Activated T-helper 1 cell treated with anti-CD3 and anti-CD28 coated beads, Interleukin-12 subunit alpha, Interleukin-12 subunit beta, Interleukin-2, Interleukin-4 antibody, amounts not matched to agents 30 ng/mL and 10 ng/mL and 1 ng/mL, durations not matched to agents 14 hours and 24 hours and 36 hours (primary cell): ENCODE measurements at regions of chr9 and their contacts with region 1.

Region 1: DNA sequence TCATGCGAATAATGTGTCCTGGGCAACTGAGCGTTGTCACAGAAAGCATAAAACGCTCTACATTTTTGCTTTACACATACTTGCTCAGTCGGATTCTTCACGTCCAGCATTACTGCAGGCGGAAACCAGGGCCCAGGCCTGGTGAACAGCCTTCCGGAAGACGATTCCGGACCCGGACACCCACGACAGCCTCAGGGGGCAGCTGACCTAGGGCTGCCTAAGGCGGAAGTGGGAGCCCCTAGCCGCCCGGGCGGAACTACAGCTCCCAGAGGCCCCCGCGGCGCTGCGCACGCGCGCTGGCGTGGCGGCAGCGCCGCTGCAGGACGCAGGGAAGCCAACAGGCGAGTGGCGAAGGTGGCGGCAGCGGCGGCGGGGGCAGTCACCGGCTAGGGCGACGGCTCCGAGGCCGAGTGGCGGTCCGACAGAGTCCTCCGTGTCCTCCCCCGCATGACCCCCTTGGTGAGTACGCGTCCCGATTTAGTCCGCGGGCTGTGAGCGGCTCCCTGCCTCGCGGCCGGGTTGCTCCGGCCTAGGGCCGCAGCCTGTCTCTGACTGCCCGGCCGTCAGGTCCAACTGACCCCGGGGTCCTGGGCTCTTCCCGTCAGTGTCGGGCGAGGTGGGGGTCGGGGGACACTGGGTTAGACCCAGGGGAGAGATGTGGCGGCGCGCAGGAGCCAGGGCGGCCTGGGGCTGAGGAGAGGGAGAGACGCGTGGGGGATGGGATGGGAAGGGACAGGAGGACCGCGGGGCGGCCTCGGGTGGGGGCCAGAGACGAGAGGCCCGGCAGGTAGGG is at the start of gene GAPVD1:
- DNase-seq: peak; percentile 88
- H3K4me3 Mint-ChIP-seq: peak within 1 kb of the TSS; percentile 99
- H3K27ac Mint-ChIP-seq: peak within 1 kb of the TSS; percentile 93
- H3K4me1 Mint-ChIP-seq: peaks cover 42% of the 10 kb centered on the region
- H3K27me3 Mint-ChIP-seq: no peaks in the 10 kb centered on the region
- total RNA-seq, gene GAPVD1: 53.6 and 56.8 TPM in 2 replicates

Region 2: GRCh38 chr9:125374443-125375309 is 113.0 kb after region 1 on chr9:
- intact Hi-C with region 1: loop called (anchors 1 kb)
- DNase-seq: peak; percentile 62
- H3K4me3 Mint-ChIP-seq: peak overlapping the region; percentile 45
- H3K27ac Mint-ChIP-seq: no peak overlapping the region
- H3K4me1 Mint-ChIP-seq: no peaks in the 10 kb centered on the region
- H3K27me3 Mint-ChIP-seq: peaks cover 6% of the 10 kb centered on the region